Caco-2 (cell line): ENCODE measurements at regions of chr3 and their contacts with region 1.

Region 1: DNA sequence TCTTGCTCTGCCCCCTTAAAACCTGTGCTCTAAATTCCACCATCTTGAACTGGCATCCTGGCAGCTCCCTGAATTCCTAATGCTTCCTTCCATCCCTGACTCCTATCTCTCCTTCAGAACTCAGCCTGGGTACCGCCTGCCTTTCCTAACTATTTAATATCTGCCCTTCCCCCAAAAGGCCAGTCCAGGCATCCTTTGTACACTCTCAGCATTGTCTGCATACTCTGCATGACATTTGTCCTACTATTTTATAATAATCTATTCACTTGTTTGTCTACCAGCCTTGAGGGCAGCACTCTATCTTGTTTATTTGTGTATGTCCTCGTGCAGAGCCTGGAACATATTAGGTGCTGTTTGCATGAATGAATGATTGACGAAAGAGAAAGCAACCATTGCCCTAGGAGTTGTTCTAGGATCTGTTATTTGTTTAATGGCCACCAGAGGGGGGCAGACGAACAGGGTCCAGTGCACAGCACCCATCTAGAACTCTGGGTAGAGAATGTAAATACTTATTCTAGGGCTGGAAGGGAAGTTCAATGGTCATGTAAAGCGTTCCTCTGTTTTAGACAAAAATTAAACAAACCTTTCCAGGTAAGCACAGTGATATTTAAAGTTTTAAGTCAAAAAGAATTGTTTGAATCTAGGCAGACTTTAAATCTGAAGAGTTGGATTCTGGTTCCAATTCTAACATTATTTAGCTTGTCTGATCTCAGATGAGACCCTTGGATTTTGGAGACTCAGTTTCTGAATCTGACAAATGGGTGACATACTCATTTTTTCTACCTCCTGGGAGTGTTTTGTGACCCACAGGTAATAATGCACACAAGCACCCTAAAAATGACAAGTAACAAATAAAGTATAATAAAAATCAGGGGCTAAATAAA is 125.8 kb upstream of the GALNT15 start:
- DNase-seq: peak; percentile 49 to 74
- H3K4me3 ChIP-seq: no peak overlapping the region
- H3K4me3 Mint-ChIP-seq: no peak overlapping the region
- H3K27ac Mint-ChIP-seq: no peak overlapping the region
- H3K4me1 ChIP-seq: no peaks in the 10 kb centered on the region
- H3K4me1 Mint-ChIP-seq: no peaks in the 10 kb centered on the region
- H3K27me3 ChIP-seq: no peaks in the 10 kb centered on the region
- H3K27me3 Mint-ChIP-seq: no peaks in the 10 kb centered on the region
- CTCF ChIP-seq: peak; percentile 75 to 79

Region 2: GRCh38 chr3:16112910-16113504 is 64.3 kb after region 1 on chr3:
- CTCF ChIA-PET with region 1: no interaction called
- POLR2A ChIA-PET with region 1: no interaction called
- intact Hi-C with region 1: no loop called
- DNase-seq: no peak
- H3K4me3 ChIP-seq: no peak overlapping the region
- H3K4me3 Mint-ChIP-seq: no peak overlapping the region
- H3K27ac Mint-ChIP-seq: no peak overlapping the region
- H3K4me1 ChIP-seq: no peaks in the 10 kb centered on the region
- H3K4me1 Mint-ChIP-seq: no peaks in the 10 kb centered on the region
- H3K27me3 ChIP-seq: no peaks in the 10 kb centered on the region
- H3K27me3 Mint-ChIP-seq: no peaks in the 10 kb centered on the region
- CTCF ChIP-seq: no peak

Region 3: DNA sequence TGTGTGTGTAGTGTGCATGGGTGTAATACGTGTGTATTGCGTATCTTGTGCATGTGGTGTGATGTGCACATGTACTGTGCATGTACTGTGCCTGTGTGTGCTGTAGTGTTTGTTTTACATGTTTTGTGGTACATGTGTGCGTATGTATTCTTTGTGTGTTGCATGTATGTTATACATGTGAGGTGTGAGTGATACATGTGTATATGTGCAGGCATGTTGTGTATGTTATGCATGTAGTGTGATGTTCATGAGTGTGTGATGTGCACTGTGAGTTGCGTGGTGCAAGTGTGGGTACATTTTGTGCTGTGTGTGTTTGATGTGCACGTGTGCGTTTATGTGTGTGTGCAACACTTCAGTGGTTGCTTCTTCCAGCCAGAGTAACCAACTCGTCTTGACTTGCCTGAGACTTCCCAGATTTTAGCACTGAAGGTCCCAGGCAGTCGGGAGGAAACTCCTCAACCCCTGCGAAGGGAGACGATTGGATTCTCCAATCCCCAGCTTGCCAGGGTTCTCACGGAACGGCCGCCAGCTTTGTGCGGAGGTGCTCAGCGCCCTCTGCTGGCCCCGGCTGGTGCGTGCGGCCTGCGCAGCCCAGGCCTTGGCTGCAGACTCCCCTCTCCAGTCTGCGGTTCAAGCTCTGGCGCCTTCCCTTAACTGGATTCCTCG is 129.4 kb after region 1 on chr3:
- CTCF ChIA-PET with region 1: interaction called, 20 read pairs
- POLR2A ChIA-PET with region 1: no interaction called
- intact Hi-C with region 1: loop called (anchors 1 kb)
- DNase-seq: peak; percentile 54 to 81
- H3K4me3 ChIP-seq: no peak overlapping the region
- H3K4me3 Mint-ChIP-seq: no peak overlapping the region
- H3K27ac Mint-ChIP-seq: no peak overlapping the region
- H3K4me1 ChIP-seq: no peaks in the 10 kb centered on the region
- H3K4me1 Mint-ChIP-seq: no peaks in the 10 kb centered on the region
- H3K27me3 ChIP-seq: no peaks in the 10 kb centered on the region; the same call in 1 of the 2 replicates
- H3K27me3 Mint-ChIP-seq: peaks cover 3% of the 10 kb centered on the region
- CTCF ChIP-seq: peak; percentile 82 to 95

Region 4: GRCh38 chr3:16467393-16467792 is 418.7 kb after region 1 on chr3:
- CTCF ChIA-PET with region 1: no interaction called
- POLR2A ChIA-PET with region 1: no interaction called
- intact Hi-C with region 1: no loop called
- DNase-seq: no peak
- H3K4me3 ChIP-seq: no peak overlapping the region
- H3K4me3 Mint-ChIP-seq: no peak overlapping the region
- H3K27ac Mint-ChIP-seq: peak overlapping the region; percentile 26
- H3K4me1 ChIP-seq: peaks cover 21% of the 10 kb centered on the region
- H3K4me1 Mint-ChIP-seq: peaks cover 34% of the 10 kb centered on the region
- H3K27me3 ChIP-seq: no peaks in the 10 kb centered on the region
- H3K27me3 Mint-ChIP-seq: no peaks in the 10 kb centered on the region
- CTCF ChIP-seq: no peak